ENCODE measurements at regions of chr6 and their contacts with region 1.

Region 1: GRCh38 chr6:142372348-142372747 is 70.5 kb downstream of the ADGRG6 start:
- DNase-seq: peak; percentile 68 to 95
- H3K4me3 ChIP-seq: no peak overlapping the region; the same call in 1 of the 2 replicates
- H3K27ac ChIP-seq: peak overlapping the region; percentile 82
- H3K4me1 ChIP-seq: peaks cover 53% of the 10 kb centered on the region
- H3K27me3 ChIP-seq: no peaks in the 10 kb centered on the region
- CTCF ChIP-seq: no peak

Region 2: DNA sequence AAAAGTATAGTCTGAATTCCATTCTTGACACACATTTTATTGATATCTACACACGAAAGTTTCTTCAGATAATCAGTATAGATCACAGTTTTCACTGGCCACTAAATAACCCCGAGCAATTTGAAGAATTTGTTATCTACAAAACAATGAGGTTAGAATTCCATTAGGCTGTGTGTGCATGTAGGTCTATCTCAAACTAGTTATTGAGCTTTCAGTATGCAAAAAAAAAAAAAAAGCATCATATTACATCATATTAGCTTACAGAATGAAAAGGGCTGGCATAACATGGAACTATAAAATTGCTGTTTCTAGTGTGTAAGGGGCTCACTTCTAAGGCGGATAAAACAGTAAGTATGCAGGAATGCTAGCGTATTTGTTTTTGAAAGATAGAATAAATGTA is 130.1 kb before region 1 on chr6:
- CTCF ChIA-PET with region 1: interaction called, 5 read pairs
- POLR2A ChIA-PET with region 1: no interaction called
- intact Hi-C with region 1: loop called (anchors 1 kb)
- DNase-seq: peak in 1 of 2 experiments; percentile 58
- H3K4me3 ChIP-seq: no peak overlapping the region
- H3K27ac ChIP-seq: no peak overlapping the region
- H3K4me1 ChIP-seq: no peaks in the 10 kb centered on the region
- H3K27me3 ChIP-seq: no peaks in the 10 kb centered on the region
- CTCF ChIP-seq: no peak

Region 3: GRCh38 chr6:142313284-142313683 is 59.1 kb before region 1 on chr6:
- CTCF ChIA-PET with region 1: no interaction called
- POLR2A ChIA-PET with region 1: no interaction called
- intact Hi-C with region 1: no loop called
- DNase-seq: no peak
- H3K4me3 ChIP-seq: no peak overlapping the region
- H3K27ac ChIP-seq: no peak overlapping the region
- H3K4me1 ChIP-seq: no peaks in the 10 kb centered on the region
- H3K27me3 ChIP-seq: no peaks in the 10 kb centered on the region
- CTCF ChIP-seq: no peak

Region 4: DNA sequence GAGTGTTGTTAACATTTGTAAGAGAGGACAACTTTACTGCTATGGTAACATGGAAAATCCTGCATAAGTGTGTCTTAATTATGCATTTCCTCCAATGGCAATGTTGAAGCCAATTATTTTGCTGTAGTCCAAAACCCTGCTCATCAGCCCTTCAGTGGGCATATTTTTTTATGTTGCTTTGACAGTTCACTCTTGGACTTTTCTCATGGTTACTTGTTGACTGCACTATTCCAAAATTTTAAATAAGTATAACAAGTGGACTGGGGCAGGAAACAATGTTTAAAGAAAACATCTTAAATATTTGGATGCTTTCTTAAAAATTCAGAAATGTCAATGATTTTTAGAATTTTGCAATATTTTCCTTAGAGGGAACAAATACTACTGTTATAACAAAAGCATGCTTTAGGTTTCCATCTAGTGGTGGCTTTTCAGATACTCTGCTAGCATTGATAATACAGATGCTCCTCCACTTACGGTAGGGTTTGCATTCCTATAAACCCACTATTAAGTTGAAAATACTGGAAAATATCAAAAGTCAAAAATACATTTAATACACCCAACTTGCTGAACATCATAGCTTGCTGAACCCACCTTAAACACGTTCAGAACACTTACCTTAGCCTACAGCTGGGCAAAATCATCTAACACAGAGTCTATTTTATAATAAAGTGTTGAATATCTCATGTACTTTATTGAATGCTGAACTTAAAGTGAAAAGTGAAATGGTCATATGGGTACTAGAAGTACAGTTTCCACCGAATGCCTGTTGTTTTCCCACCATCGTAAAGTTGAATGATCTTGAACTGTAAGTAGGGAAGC is 15.9 kb after region 1 on chr6:
- CTCF ChIA-PET with region 1: no interaction called
- POLR2A ChIA-PET with region 1: no interaction called
- intact Hi-C with region 1: no loop called
- DNase-seq: peak in 1 of 2 experiments; percentile 66
- H3K4me3 ChIP-seq: no peak overlapping the region
- H3K27ac ChIP-seq: no peak overlapping the region
- H3K4me1 ChIP-seq: peaks cover 17% of the 10 kb centered on the region
- H3K27me3 ChIP-seq: no peaks in the 10 kb centered on the region
- CTCF ChIP-seq: peak; percentile 84

Region 5: DNA sequence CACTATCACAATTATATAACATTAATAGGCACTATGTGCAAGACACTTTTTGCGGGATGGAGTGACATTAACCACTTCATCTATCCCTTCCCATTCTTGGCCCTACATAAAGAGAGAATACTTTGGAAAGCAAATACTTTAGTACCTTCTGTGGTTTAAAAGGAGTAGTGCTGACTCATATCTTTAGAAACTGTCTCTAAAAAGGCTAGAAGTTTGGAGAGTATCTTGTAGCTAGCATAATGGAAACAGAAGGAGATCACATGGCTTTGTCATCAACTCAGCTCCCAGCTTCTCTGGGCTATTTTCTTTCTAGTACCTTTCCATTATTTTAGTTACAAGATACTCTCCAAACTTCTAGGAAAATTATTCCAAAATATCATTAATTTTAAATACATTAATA is 86.9 kb after region 1 on chr6:
- CTCF ChIA-PET with region 1: no interaction called
- POLR2A ChIA-PET with region 1: no interaction called
- intact Hi-C with region 1: no loop called
- DNase-seq: no peak
- H3K4me3 ChIP-seq: no peak overlapping the region
- H3K27ac ChIP-seq: no peak overlapping the region
- H3K4me1 ChIP-seq: no peaks in the 10 kb centered on the region
- H3K27me3 ChIP-seq: no peaks in the 10 kb centered on the region
- CTCF ChIP-seq: no peak

Region 6: DNA sequence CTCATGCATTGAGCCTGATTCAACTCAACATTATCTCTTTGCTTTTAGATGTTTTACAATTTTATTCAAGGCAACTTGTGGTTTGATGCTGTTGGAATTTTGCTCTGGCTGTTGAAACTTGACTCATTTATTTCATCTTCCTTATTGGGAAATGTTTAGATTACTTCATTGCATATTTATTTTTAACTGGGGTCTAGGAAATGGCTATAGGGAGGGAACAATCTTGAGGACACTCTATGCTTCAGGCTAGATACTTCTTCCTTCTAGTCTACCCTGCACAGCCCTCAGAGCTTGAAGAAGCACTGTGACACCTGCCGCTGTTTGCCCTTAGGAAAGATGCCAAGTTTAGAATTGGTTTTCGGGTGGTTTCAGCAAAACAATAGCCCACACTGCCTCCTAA is 112.9 kb after region 1 on chr6:
- CTCF ChIA-PET with region 1: no interaction called
- POLR2A ChIA-PET with region 1: no interaction called
- intact Hi-C with region 1: no loop called
- DNase-seq: peak in 1 of 2 experiments; percentile 37
- H3K4me3 ChIP-seq: no peak overlapping the region
- H3K27ac ChIP-seq: no peak overlapping the region
- H3K4me1 ChIP-seq: no peaks in the 10 kb centered on the region
- H3K27me3 ChIP-seq: no peaks in the 10 kb centered on the region
- CTCF ChIP-seq: no peak

Measured in PC-9 (cell line).